ENCODE measurements at regions of chr18 and their contacts with region 1.

Region 1: GRCh38 chr18:9117980-9118841 is 15.7 kb downstream of the NDUFV2 start:
- DNase-seq: peak in 2 of 9 experiments; percentile 66 to 83
- ATAC-seq: peak; percentile 50
- H3K4me3 ChIP-seq: peak overlapping the region; percentile 14 to 42
- H3K4me3 Mint-ChIP-seq: peak overlapping the region; percentile 75
- H3K27ac ChIP-seq: peak overlapping the region; percentile 76 to 86
- H3K27ac Mint-ChIP-seq: peak overlapping the region; percentile 95
- H3K4me1 ChIP-seq: peaks cover 84% of the 10 kb centered on the region
- H3K4me1 Mint-ChIP-seq: peaks cover 80% of the 10 kb centered on the region
- H3K27me3 ChIP-seq: no peaks in the 10 kb centered on the region
- H3K27me3 Mint-ChIP-seq: no peaks in the 10 kb centered on the region
- CTCF ChIP-seq: no peak

Region 2: GRCh38 chr18:9130806-9131205 is 12.6 kb after region 1 on chr18:
- CTCF ChIA-PET with region 1: interaction called, 9 read pairs
- POLR2A ChIA-PET with region 1: interaction called, 78 read pairs
- intact Hi-C with region 1: loop called (anchors 1 kb)
- DNase-seq: no peak
- ATAC-seq: no peak
- H3K4me3 ChIP-seq: no peak overlapping the region
- H3K4me3 Mint-ChIP-seq: no peak overlapping the region
- H3K27ac ChIP-seq: peak overlapping the region in 1 of 2 experiments; percentile 17
- H3K27ac Mint-ChIP-seq: peak overlapping the region; percentile 0
- H3K4me1 ChIP-seq: peaks cover 21% of the 10 kb centered on the region
- H3K4me1 Mint-ChIP-seq: peaks cover 66% of the 10 kb centered on the region
- H3K27me3 ChIP-seq: no peaks in the 10 kb centered on the region
- H3K27me3 Mint-ChIP-seq: no peaks in the 10 kb centered on the region
- CTCF ChIP-seq: no peak